Right ventricle myocardium inferior (tissue), 1 donor: ENCODE measurements at regions of chr1 and their contacts with region 1.

Region 1: GRCh38 chr1:41516168-41517061 is 31.9 kb upstream of the EDN2 start:
- DNase-seq: peak; percentile 95
- ATAC-seq: peak; percentile 95

Region 2: DNA sequence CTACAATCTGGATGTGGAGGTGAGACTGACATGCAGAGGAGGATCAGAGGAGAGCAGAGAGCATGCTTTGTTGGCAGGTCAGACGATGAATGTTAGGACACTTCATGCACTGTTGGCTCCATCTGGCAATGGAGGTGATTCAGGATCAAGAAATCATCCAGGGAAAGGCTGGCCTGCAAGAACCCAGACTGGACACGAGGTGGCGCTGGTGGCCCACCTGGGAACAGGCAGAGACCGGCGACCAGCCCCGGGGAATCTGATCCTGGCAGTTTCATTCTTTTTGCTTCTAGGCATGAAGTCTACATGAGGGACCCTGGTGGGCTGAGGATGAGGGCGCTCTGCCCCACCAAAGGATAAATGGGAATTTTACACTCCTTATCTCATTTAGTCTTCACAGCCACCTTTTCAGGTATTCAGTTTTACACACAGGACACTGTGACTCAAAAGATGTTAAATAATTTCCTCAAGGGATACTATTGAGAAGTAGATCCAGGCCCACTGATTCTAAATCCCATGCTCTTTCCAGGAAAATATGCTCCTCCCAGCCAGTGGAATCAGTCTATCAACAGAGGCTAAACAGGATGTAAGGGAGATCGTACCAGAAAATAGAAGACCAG is 248.2 kb before region 1 on chr1:
- intact Hi-C with region 1: loop called (anchors 1 kb)
- DNase-seq: peak; percentile 87
- ATAC-seq: peak; percentile 82

Region 3: GRCh38 chr1:41537788-41538351 is 21.5 kb after region 1 on chr1:
- intact Hi-C with region 1: no loop called
- DNase-seq: peak; percentile 83
- ATAC-seq: peak; percentile 65

Region 4: DNA sequence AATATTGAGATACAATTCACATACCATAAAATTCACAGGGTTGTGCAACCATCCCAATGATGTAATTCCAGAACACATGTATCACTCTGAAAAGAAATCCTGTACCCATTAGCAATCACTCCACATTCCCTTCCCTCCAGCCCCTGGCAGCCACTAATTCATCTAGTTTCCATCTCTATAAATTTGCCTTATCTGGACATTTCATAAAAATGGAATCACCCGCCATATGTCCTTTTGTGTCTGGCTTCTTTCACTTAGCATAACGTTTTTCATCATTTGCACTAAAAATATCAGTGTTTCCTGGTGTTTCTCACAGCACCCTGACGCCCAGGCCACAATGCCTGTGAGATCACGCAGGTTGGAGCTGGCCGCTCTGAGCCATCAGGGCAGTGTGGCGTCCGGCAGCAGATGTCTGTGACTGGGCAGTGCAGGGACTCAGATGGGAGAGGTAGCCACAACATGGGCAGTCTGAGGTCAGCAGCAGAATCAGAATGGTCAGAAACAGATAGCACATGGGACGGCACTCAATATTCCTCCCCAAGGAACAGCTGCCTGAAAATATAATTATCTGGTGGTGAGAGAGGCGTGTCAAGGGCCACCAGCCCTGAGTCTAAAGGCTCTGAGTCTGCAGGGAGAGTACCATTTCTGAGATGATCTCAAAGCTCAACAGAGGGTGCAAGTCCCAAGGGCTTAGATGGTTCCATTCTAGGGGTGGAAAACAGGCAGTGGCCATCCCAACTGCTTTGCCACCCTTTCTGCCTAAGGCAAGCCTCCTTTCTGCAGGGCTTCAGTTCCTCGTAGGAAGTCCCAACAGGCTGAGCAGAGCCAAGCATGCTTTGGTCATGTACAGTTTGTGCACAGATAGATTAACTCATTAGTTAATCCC is 97.5 kb after region 1 on chr1:
- intact Hi-C with region 1: no loop called
- DNase-seq: no peak
- ATAC-seq: no peak